Activated CD4-positive, alpha-beta memory T cell treated with anti-CD3 and anti-CD28 coated beads, Interleukin-2, amount 10 ng/mL, durations not matched to agents 7 days and 5 days (primary cell): ENCODE measurements at regions of chr11 and their contacts with region 1.

Region 1: GRCh38 chr11:12288212-12288930 is 89.0 kb upstream of the PARVA start:
- DNase-seq: peak; percentile 61
- H3K4me3 Mint-ChIP-seq: no peak overlapping the region
- H3K27ac Mint-ChIP-seq: no peak overlapping the region
- H3K4me1 Mint-ChIP-seq: peaks cover 16% of the 10 kb centered on the region
- H3K27me3 Mint-ChIP-seq: no peaks in the 10 kb centered on the region

Region 2: DNA sequence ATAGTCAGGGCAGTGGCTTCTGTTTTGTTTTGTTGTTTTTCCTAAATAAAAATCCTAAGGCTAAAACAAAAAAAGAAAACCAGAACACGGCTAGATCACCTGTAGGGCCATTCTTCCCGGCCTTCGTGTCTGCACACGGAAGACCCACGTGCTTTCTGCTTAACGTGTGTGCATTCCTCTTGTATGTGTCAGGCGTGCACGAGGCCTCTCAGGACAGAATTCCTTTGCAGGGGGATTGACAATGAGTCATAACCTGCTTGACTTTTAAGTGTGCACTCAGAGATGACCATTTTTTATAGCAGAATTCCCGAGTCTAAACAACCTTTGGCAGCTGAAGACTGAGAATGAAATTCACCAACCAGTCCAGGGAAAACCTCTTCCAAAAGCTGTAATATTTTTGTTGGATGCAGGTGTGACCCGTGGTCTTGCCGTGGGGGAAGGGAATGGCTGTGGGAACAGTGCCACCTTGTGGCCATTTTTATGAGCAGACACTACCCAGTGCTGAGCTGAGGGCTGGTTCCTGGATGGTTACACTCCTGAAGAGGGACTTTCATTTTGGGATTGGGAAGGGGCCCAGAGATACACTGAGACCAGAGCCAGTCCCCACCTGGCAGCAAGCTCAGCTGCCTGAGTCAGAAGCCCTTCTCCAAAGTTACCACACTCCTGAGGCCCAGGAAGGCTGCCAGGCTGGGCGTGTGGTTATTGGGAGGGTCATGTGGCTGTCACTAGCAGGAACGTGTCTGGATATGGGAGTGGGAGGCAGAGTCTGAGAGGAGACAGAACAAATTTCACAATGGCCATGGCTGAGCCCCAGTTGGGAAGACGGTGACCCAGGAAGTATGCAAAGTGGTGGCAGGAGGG is 244.2 kb before region 1 on chr11:
- CTCF ChIA-PET with region 1: interaction called, 212 read pairs
- POLR2A ChIA-PET with region 1: no interaction called
- DNase-seq: peak; percentile 72
- H3K4me3 Mint-ChIP-seq: no peak overlapping the region
- H3K27ac Mint-ChIP-seq: no peak overlapping the region
- H3K4me1 Mint-ChIP-seq: peaks cover 9% of the 10 kb centered on the region
- H3K27me3 Mint-ChIP-seq: peaks cover 4% of the 10 kb centered on the region

Region 3: DNA sequence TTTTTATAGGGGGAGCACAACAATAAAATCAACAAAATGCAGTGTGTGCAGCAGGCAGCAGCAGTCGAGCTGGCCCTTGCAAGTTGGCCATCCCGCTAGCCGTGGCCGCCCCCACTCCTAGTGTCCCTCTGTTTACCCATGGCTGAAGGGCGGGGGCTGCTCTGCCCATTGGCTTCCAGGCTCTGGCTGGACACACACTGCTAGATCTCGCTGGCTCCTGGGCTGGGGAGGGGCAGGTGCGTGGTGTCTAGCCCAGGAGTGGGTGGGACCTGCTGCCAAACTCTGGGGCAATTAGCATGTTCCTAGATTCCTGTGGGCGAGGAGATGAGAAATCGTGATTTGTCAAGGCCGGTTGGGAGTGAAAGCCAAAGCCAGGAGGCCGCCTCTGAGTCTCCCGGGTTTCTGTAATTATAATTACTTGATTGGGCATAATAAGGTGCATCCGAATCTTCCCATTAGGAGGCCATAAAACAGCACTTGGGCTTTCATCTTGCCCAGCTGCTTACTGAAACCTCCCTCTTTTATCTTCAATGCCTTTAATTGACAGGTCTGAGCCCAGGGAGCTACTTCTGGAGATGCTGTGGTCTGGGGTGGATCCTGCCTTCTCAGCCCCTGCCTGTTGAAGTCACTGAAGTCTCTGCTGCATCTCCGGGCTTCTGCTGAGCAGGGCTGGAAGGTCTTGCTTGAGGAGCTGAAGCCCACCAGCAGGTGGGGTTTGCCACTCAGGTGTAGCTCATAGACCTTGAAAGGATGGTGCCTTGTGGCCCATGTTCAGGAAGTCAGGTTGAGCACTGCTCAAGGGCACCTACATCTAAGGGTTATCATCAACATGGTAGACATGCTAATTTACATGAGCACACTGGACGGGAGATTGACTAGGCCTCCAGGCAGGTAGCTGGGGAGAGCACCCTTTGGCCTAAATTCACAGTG is 235.4 kb before region 1 on chr11:
- CTCF ChIA-PET with region 1: interaction called, 212 read pairs
- POLR2A ChIA-PET with region 1: interaction called, 4 read pairs
- DNase-seq: peak; percentile 44
- H3K4me3 Mint-ChIP-seq: no peak overlapping the region
- H3K27ac Mint-ChIP-seq: no peak overlapping the region
- H3K4me1 Mint-ChIP-seq: peaks cover 1% of the 10 kb centered on the region
- H3K27me3 Mint-ChIP-seq: no peaks in the 10 kb centered on the region

Region 4: GRCh38 chr11:12137938-12138731 is 150.2 kb before region 1 on chr11:
- CTCF ChIA-PET with region 1: no interaction called
- POLR2A ChIA-PET with region 1: no interaction called
- DNase-seq: no peak
- H3K4me3 Mint-ChIP-seq: no peak overlapping the region
- H3K27ac Mint-ChIP-seq: peak overlapping the region; percentile 65
- H3K4me1 Mint-ChIP-seq: peaks cover 58% of the 10 kb centered on the region
- H3K27me3 Mint-ChIP-seq: no peaks in the 10 kb centered on the region

Region 5: GRCh38 chr11:12249590-12250260 is 38.6 kb before region 1 on chr11:
- CTCF ChIA-PET with region 1: no interaction called
- POLR2A ChIA-PET with region 1: no interaction called
- DNase-seq: no peak
- H3K4me3 Mint-ChIP-seq: no peak overlapping the region
- H3K27ac Mint-ChIP-seq: no peak overlapping the region
- H3K4me1 Mint-ChIP-seq: no peaks in the 10 kb centered on the region
- H3K27me3 Mint-ChIP-seq: no peaks in the 10 kb centered on the region

Region 6: DNA sequence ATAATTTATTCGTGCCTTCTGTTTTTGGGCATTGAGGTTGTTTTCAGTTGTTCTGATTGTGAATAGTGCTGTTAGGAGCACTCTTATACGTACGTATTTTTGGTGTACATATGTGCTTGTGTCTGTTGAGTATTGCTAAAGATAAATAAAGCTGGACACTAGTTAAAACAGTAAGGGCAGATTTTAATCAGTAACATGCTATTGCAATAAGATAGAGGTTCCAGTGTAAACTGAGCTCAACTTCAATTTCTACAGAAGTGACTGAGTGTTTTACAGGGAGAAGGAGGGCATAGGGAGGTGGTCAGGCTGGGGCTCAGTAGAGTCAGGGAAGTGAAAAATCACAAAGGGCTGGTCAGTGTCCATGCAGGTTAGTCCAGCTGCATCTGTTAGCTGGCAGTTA is 13.0 kb after region 1 on chr11:
- CTCF ChIA-PET with region 1: interaction called, 17 read pairs
- POLR2A ChIA-PET with region 1: no interaction called
- DNase-seq: no peak
- H3K4me3 Mint-ChIP-seq: no peak overlapping the region
- H3K27ac Mint-ChIP-seq: no peak overlapping the region
- H3K4me1 Mint-ChIP-seq: no peaks in the 10 kb centered on the region
- H3K27me3 Mint-ChIP-seq: peaks cover 2% of the 10 kb centered on the region

Region 7: GRCh38 chr11:12306830-12307229 is 18.5 kb after region 1 on chr11:
- CTCF ChIA-PET with region 1: interaction called, 17 read pairs
- POLR2A ChIA-PET with region 1: no interaction called
- DNase-seq: no peak
- H3K4me3 Mint-ChIP-seq: no peak overlapping the region
- H3K27ac Mint-ChIP-seq: no peak overlapping the region
- H3K4me1 Mint-ChIP-seq: no peaks in the 10 kb centered on the region
- H3K27me3 Mint-ChIP-seq: peaks cover 2% of the 10 kb centered on the region